ENCODE measurements at regions of chr2 and their contacts with region 1.

Region 1: GRCh38 chr2:24827321-24828237 is 34.4 kb downstream of the CENPO start:
- DNase-seq: peak; percentile 88
- CTCF ChIP-seq: peak; percentile 94

Region 2: DNA sequence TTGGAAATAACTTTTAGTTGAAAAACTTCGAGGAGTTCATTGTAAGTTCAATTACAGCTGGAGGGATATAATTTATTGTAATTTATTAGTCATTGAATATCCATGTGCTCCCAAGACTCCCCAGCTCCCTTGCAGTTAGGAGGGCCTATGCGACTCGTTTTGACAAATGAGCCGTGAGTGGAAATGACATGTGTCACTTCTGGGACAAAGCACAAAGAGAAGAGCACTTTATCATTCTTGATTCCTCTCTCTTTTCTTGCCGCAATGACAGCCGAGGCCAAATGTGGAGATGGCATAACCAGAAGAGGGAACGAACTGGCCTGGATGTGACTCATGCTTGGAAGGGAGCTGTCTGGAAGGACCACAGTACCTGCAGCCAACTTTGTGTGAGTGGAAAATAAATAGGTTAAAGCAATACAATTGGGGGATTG is 423.1 kb before region 1 on chr2:
- CTCF ChIA-PET with region 1: interaction called, 125 read pairs
- POLR2A ChIA-PET with region 1: no interaction called
- DNase-seq: no peak
- CTCF ChIP-seq: no peak

Region 3: GRCh38 chr2:24409700-24410556 is 417.7 kb before region 1 on chr2:
- CTCF ChIA-PET with region 1: interaction called, 125 read pairs
- POLR2A ChIA-PET with region 1: no interaction called
- DNase-seq: peak; percentile 77
- CTCF ChIP-seq: peak; percentile 80

Region 4: GRCh38 chr2:24421668-24422067 is 405.9 kb before region 1 on chr2:
- CTCF ChIA-PET with region 1: interaction called, 102 read pairs
- POLR2A ChIA-PET with region 1: no interaction called
- DNase-seq: peak; percentile 52
- CTCF ChIP-seq: peak; percentile 48

Region 5: GRCh38 chr2:24613154-24613814 is 214.3 kb before region 1 on chr2:
- CTCF ChIA-PET with region 1: interaction called, 14 read pairs
- POLR2A ChIA-PET with region 1: no interaction called
- DNase-seq: peak; percentile 54
- CTCF ChIP-seq: peak; percentile 29

Region 6: DNA sequence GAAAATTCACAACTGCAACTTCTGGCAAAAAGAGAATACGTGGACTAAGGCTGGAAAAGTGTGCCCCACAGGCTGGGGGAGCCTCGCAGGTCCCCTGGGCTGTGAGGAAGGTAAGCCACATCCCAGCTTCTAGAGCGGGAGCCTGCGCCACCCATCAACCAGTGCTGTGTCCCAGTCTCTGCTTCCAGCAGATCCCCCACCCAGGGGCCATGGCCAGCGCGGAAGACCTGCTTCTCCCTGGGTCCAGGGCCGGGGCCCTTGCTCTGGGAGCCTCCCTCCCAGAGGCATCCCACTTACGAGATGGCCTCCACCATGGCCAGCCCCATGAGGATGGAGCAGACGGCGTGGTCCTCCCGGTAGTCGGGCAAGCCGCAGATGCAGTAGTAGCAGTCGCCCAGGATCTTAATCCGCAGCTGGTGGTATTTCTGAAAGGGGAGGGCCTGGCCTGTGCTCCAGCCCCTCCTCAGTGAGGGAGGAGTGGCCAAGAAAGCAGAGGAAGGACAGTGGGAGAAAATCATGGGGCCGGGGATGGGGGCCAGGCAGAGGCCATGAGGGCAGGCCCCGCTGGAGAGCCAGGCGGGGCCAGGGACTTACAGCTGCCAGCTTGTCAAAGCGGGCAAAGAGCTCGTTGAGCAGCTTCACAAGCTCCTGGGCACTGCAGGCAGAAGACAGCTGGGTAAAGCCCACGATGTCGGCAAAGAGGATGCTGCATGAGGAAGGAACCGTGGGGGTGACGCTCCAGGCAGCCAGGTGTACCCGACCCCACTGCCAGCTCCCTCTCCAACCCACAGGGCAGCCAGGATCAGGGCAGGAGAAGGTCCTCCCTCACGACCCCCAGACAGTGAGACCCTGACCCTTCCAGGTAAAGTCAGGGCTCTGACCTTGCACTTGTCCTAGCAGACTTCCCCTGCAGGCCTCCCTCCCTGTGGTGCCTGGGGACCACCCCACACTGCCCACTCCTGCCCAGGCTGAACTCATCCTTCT is 13.7 kb after region 1 on chr2:
- CTCF ChIA-PET with region 1: interaction called, 19 read pairs
- POLR2A ChIA-PET with region 1: interaction called, 6 read pairs
- DNase-seq: no peak
- CTCF ChIP-seq: no peak

Region 7: DNA sequence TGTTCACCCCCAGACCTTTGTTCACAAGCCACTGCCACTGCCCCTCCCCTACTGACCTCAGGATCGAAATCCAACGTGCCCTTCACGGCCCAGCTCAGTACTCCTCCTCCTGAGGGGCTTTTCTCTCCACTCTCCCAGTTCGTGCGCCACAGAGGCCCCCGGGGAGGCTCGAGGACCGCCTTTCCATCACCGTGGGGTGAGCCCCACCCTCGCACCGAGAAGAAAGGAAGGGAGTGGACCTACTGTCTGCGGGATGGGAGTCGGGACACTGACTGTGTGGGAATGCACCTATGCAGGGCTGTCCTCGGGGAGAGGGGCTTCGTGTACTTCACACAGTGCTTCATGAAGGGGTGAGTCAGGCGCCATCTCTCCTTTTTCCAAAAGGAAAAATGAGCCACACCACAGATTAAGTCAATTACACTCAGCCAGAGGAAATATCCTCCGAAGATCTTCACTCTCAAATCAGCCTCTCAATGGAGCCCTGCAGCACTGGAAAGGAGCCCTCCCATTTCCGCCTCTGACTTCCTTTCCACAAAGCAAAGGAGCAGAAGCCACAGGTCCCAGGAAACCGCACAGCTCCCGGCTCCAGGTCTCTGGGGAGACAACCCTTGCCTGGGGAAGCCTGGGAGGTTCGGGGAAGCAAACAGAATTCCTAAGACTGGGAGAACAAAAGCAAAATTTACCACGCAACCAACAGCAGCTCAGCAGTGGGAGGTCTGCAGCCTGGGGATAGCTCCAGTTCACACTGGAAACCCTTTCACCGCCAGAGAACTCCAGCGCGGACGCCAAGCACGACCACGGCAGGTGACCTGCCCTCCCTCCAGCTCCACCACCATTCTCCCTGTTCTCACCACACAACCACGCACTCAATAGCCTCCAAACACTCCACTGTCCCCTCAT is 70.8 kb after region 1 on chr2:
- CTCF ChIA-PET with region 1: no interaction called
- POLR2A ChIA-PET with region 1: no interaction called
- DNase-seq: no peak
- CTCF ChIP-seq: no peak

Measured in GM10248 (cell line).